Panc1 (cell line): ENCODE measurements at regions of chr2 and their contacts with region 1.

Region 1: DNA sequence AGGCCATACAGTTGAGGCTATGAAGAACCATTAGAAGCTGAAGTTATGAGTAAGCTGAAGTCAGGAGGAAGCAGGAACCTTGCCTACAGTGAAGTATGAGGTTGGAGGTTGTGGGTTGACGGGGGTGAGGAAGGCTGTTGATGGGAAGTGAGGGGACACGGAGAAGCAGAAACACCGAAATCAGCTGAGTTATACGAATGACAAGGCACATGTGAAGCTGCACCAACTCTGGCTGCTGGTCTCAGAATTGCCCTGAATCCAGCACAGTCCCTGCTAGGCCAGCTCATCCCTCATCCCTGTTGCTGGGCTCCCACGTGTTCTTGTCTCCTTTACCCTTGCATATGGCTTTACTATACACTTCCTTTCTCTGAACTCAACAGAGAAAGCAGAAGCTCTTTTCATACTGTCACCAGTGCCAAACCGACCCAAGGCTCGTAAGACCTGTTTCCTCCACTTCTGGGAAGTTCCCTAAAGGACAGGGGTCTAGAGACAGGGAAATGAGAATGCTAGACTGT is 9.2 kb upstream of the TMEM247 start:
- DNase-seq: no peak
- ATAC-seq: no peak
- H3K4me3 ChIP-seq: no peak overlapping the region
- H3K27ac ChIP-seq: no peak overlapping the region
- H3K4me1 ChIP-seq: no peaks in the 10 kb centered on the region
- H3K27me3 ChIP-seq: no peaks in the 10 kb centered on the region
- CTCF ChIP-seq: no peak

Region 2: GRCh38 chr2:46485002-46485401 is 14.8 kb after region 1 on chr2:
- CTCF ChIA-PET with region 1: no interaction called
- POLR2A ChIA-PET with region 1: interaction called, 10 read pairs
- in situ Hi-C with region 1: no loop called
- intact Hi-C with region 1: no loop called
- DNase-seq: no peak
- ATAC-seq: no peak
- H3K4me3 ChIP-seq: no peak overlapping the region
- H3K27ac ChIP-seq: no peak overlapping the region
- H3K4me1 ChIP-seq: no peaks in the 10 kb centered on the region; the same call in 1 of the 2 replicates
- H3K27me3 ChIP-seq: peaks cover 5% of the 10 kb centered on the region; the same call in 1 of the 2 replicates
- CTCF ChIP-seq: no peak